Natural killer cell (primary cell): ENCODE measurements at regions of chr2 and their contacts with region 1.

Region 1: DNA sequence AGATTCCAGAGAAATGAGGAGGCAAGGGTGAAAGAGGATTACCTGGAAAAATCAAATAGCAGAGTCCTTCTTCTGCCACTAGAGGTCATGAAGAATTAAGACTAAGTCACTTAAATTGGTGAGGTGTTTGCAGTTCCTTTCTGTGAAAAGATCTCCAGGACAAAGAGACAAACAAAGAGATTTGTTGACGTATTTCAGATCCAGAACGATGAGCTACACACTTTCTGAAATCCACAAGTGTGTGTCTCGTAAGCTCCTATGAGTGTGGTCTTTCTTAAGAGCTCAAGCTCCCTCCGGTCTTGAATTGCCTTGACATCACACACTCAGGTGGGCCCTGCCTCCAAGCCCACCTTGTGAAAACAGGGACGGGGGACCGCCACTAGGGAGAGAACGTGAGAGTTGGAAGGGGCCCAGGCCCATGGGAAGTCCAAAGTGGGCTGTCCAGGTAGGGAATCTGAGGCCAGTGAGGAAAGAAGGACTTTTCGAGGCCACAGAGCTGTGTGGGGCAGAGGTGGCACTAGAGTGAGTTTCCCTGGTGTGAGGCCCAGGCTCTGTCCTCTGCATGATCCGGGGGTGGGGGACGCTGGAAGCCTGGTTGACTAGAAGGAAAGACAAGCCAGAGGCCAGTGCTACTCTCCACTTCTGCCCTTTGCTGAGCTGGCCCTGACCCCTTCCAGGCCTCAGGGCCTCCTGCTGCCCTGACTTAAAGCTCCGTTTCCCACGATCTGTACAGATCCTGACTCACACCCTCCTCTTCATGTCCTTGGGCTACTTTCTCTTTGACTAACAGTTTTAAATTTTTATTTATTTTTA is 168.1 kb upstream of the NCK2 start:
- DNase-seq: peak in 1 of 2 donors; percentile 64
- ATAC-seq: no peak
- H3K4me3 ChIP-seq: no peak overlapping the region
- H3K4me3 Mint-ChIP-seq: no peak overlapping the region
- H3K27ac ChIP-seq: no peak overlapping the region
- H3K27ac Mint-ChIP-seq: no peak overlapping the region
- H3K4me1 ChIP-seq: peaks cover under 1% of the 10 kb centered on the region
- H3K4me1 Mint-ChIP-seq: peaks cover 0 to 10% of the 10 kb centered on the region in 2 donors
- H3K27me3 ChIP-seq: no peaks in the 10 kb centered on the region
- H3K27me3 Mint-ChIP-seq: peaks cover 7 to 12% of the 10 kb centered on the region in 2 donors
- CTCF ChIP-seq: peak; percentile 13

Region 2: DNA sequence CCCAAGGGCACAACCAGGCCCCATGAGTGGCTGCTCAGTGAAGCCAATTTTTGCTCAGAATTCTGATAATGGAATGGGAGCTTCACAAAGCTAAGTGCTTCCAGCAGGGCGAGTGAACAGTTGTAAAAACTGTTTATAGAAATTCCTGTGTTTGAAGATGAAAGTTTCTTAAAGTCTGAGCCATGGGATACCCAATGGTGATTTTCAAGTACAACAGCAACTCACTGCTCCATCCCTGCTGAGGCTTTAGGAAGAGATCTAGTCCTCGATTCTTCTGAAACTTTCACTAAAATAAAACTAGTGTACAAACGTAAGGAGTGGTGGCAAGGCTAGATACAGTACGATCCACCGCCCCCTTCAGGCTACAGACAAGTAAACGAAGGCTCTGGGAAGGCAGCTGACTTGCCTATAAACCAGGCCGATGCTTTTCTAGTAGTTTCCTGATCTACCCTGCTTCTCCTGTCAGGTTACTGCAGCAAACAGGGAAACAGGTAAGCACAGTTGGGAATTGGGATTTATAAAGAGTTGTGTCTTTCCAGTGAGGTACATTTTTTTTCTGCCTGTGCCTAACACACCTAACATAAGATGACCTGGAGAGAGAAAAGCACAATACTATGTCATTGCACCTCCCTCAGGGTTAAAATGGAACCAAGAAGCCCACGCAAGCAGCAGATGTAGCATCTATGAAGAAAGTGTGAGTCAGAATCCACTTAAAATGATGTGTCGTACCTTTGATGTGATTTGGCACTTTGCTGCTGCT is 508.7 kb after region 1 on chr2:
- intact Hi-C with region 1: loop called (anchors 5 kb)
- DNase-seq: peak in 1 of 2 donors; percentile 82
- ATAC-seq: peak in 2 of 3 donors; percentile 55 to 60
- H3K4me3 ChIP-seq: no peak overlapping the region
- H3K4me3 Mint-ChIP-seq: no peak overlapping the region
- H3K27ac ChIP-seq: no peak overlapping the region
- H3K27ac Mint-ChIP-seq: no peak overlapping the region
- H3K4me1 ChIP-seq: no peaks in the 10 kb centered on the region
- H3K4me1 Mint-ChIP-seq: no peaks in the 10 kb centered on the region
- H3K27me3 ChIP-seq: no peaks in the 10 kb centered on the region
- H3K27me3 Mint-ChIP-seq: peaks cover 2 to 16% of the 10 kb centered on the region in 2 donors
- CTCF ChIP-seq: no peak